ENCODE measurements at regions of chr13 and their contacts with region 1.

Region 1: DNA sequence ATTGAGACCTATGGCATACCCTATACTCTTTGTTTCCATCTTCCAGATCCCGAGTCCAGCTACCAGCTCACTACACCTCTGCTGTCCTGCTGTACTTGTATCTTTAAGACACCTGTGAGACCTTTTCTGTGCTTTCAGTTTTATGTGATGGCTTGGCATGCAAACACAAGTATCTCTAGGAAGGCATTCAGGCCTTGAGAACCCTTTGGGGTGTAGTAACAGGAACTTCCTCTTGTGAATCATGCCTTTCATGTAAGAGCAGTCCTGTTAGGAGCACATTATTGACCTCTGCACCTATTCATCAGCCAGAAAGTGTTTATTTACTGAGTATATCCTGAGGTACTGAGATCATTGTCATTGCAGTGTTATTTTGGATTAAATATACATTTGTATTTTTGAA is 87.0 kb upstream of the HTR2A start:
- DNase-seq: no peak
- ATAC-seq: peak; percentile 53
- H3K4me3 Mint-ChIP-seq: peak overlapping the region; percentile 58
- H3K27ac Mint-ChIP-seq: peak overlapping the region; percentile 77
- H3K4me1 Mint-ChIP-seq: peaks cover 28% of the 10 kb centered on the region
- H3K27me3 Mint-ChIP-seq: peaks cover 2% of the 10 kb centered on the region
- CTCF ChIP-seq: no peak

Region 2: GRCh38 chr13:46403851-46404732 is 579.8 kb before region 1 on chr13:
- CTCF ChIA-PET with region 1: no interaction called
- POLR2A ChIA-PET with region 1: no interaction called
- intact Hi-C with region 1: no loop called
- DNase-seq: no peak
- ATAC-seq: no peak
- H3K4me3 Mint-ChIP-seq: no peak overlapping the region
- H3K27ac Mint-ChIP-seq: peak overlapping the region; percentile 60
- H3K4me1 Mint-ChIP-seq: peaks cover 61% of the 10 kb centered on the region
- H3K27me3 Mint-ChIP-seq: no peaks in the 10 kb centered on the region
- CTCF ChIP-seq: no peak

Region 3: DNA sequence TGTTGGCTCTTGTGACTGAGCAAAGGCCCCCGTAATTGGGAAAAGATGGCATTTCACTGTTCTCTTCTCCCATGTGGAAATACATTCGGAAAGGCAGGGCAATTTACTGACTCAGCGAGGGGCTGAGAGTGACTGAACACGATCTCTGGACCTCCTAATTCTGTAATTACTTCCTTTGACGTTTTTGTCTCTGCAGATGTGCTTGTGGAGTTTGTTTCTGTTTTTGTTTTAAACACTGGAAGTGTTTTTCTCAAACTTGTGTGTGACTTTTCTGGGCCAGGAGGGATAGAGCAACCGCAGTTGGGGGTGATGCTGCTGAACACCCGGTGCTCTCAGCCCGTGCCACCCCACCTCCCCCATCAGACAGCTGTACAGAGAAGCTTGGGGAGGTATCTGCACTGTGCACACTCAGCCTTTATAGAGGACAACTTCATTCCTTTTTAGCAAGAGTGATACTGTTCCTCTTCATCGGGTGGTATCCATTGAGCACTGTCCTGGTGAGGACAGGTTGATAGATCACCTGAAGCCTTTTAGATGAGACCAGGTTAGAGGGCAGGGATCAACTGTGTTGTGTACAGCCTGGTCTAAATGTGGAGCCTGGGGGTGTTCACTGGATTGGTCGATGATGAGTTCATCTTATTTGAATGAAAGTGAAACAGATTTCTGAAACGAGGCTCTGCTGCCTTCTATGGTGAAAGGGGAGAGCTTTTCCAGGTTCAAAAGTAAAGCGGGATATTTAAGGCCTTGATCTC is 304.3 kb before region 1 on chr13:
- CTCF ChIA-PET with region 1: no interaction called
- POLR2A ChIA-PET with region 1: no interaction called
- intact Hi-C with region 1: no loop called
- DNase-seq: peak; percentile 20
- ATAC-seq: peak; percentile 90
- H3K4me3 Mint-ChIP-seq: no peak overlapping the region
- H3K27ac Mint-ChIP-seq: no peak overlapping the region
- H3K4me1 Mint-ChIP-seq: peaks cover 29% of the 10 kb centered on the region
- H3K27me3 Mint-ChIP-seq: no peaks in the 10 kb centered on the region
- CTCF ChIP-seq: no peak

Region 4: DNA sequence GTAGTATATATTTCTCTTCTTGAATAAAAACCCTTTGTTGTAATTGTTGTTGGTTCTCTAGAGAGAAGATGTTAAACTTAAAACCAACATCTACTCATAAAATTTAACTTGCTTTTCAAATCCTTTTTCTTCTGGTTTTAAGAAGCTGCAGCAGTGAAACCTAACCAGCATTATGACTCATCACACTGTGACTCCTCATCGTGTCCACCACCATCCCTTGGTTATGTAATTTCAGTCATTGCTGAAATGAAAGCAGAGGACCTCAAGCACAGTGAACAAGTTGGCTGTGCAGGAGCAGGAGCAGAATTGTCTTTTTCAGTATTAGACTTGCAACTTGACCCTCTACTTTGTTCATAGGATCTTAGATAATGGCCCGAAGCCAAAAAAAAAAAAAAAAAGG is 22.2 kb before region 1 on chr13:
- CTCF ChIA-PET with region 1: interaction called, 13 read pairs
- POLR2A ChIA-PET with region 1: no interaction called
- intact Hi-C with region 1: loop called (anchors 2 kb)
- DNase-seq: no peak
- ATAC-seq: no peak
- H3K4me3 Mint-ChIP-seq: no peak overlapping the region
- H3K27ac Mint-ChIP-seq: no peak overlapping the region
- H3K4me1 Mint-ChIP-seq: peaks cover 2% of the 10 kb centered on the region
- H3K27me3 Mint-ChIP-seq: peaks cover 2% of the 10 kb centered on the region
- CTCF ChIP-seq: no peak

Region 5: DNA sequence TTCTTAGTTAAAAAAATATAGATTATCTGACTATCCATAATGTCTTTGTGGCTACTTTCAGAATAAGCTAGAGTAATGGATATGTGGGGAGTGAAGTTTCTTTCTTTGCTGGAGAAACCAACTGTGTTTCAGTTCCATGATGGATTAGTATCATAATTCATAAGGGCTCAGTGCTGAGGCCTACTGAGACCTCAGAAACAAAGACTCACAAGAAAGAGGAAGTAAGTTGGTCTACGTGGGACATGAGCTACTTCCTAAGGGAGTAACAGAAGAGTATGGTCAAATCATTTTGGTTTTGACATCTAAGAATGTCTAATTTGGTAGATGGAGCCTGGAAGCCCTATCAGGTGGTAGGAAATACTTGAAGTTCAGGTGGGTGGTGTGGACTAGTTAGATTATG is 12.0 kb after region 1 on chr13:
- CTCF ChIA-PET with region 1: interaction called, 4 read pairs
- POLR2A ChIA-PET with region 1: interaction called, 3 read pairs
- intact Hi-C with region 1: loop called (anchors 2 kb)
- DNase-seq: no peak
- ATAC-seq: peak; percentile 66
- H3K4me3 Mint-ChIP-seq: no peak overlapping the region
- H3K27ac Mint-ChIP-seq: peak overlapping the region; percentile 30
- H3K4me1 Mint-ChIP-seq: peaks cover 11% of the 10 kb centered on the region
- H3K27me3 Mint-ChIP-seq: no peaks in the 10 kb centered on the region
- CTCF ChIP-seq: no peak

Region 6: DNA sequence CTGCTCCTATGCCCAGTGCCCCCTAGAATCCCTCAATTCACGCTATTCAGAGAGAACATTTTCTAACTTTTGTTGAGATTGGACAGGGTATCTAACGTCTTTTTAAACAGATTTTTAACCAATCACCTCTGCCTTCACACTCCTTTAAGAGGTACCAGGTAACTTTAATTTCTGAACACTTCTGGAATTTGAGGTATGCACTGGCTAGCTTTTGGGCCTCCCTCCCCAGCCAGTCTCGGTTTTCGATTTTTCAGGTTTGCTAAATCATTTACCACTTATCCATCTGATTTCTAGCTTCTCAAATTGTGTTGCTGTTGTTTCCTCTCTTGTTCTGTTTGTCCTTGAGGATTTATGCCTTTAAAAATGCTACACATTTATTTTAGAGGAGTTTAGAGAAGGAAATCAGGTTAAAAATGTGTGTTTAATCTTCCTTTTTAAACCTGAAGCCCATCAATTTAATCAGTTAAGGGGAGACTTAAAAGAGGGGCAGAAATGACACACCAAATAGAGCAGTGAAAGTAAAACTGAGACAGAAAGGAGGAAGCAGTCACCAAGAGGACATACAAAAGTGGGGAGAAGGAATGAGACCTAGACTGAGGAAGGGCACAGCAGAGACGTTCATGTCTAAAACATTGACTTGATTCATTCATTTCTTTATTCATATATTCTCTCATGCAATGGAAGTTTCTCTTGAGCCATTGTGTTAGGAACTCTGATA is 52.6 kb after region 1 on chr13:
- CTCF ChIA-PET with region 1: no interaction called
- POLR2A ChIA-PET with region 1: no interaction called
- intact Hi-C with region 1: loop called (anchors 2 kb)
- DNase-seq: no peak
- ATAC-seq: peak; percentile 81
- H3K4me3 Mint-ChIP-seq: no peak overlapping the region
- H3K27ac Mint-ChIP-seq: peak overlapping the region; percentile 54
- H3K4me1 Mint-ChIP-seq: peaks cover 11% of the 10 kb centered on the region
- H3K27me3 Mint-ChIP-seq: peaks cover 9% of the 10 kb centered on the region
- CTCF ChIP-seq: no peak

Region 7: DNA sequence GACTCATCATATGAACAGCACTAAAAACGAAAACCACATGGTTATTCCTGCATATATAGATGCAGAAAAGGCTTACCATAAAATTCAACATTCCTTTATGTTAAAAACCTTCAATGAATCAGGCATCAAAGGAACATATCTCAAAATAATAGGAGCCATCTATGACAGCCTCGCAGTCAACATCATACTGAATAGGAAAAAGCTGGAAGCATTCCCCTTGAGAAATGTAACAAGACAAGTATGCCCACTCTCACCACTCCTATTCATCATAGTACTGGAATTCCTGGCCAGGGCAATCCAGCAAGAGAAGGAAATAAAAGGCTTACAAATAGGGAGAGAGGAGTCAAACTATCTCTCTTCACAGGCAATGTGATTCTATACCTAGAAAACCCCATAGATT is 92.6 kb after region 1 on chr13:
- CTCF ChIA-PET with region 1: no interaction called
- POLR2A ChIA-PET with region 1: no interaction called
- intact Hi-C with region 1: no loop called
- DNase-seq: no peak
- ATAC-seq: no peak
- H3K4me3 Mint-ChIP-seq: no peak overlapping the region
- H3K27ac Mint-ChIP-seq: no peak overlapping the region
- H3K4me1 Mint-ChIP-seq: no peaks in the 10 kb centered on the region
- H3K27me3 Mint-ChIP-seq: peaks cover 3% of the 10 kb centered on the region
- CTCF ChIP-seq: no peak